Caco-2 (cell line): ENCODE measurements at regions of chr15 and their contacts with region 1.

Region 1: GRCh38 chr15:94844538-94845389 is 613.4 kb downstream of the MCTP2 start:
- DNase-seq: peak; percentile 78 to 84
- H3K4me3 ChIP-seq: peak overlapping the region; percentile 34
- H3K4me3 Mint-ChIP-seq: peak overlapping the region; percentile 76
- H3K27ac Mint-ChIP-seq: peak overlapping the region; percentile 84
- H3K4me1 ChIP-seq: peaks cover 10% of the 10 kb centered on the region; the same call in 1 of the 2 replicates
- H3K4me1 Mint-ChIP-seq: peaks cover 6% of the 10 kb centered on the region
- H3K27me3 ChIP-seq: no peaks in the 10 kb centered on the region
- H3K27me3 Mint-ChIP-seq: no peaks in the 10 kb centered on the region
- CTCF ChIP-seq: peak in 1 of 2 experiments; percentile 10

Region 2: GRCh38 chr15:94834506-94834905 is 10.3 kb before region 1 on chr15:
- CTCF ChIA-PET with region 1: interaction called, 4 read pairs
- POLR2A ChIA-PET with region 1: interaction called, 3 read pairs
- intact Hi-C with region 1: loop called (anchors 1 kb)
- DNase-seq: peak; percentile 40 to 65
- H3K4me3 ChIP-seq: no peak overlapping the region
- H3K4me3 Mint-ChIP-seq: peak overlapping the region; percentile 18
- H3K27ac Mint-ChIP-seq: peak overlapping the region; percentile 82
- H3K4me1 ChIP-seq: peaks cover 35% of the 10 kb centered on the region
- H3K4me1 Mint-ChIP-seq: peaks cover 18% of the 10 kb centered on the region
- H3K27me3 ChIP-seq: no peaks in the 10 kb centered on the region
- H3K27me3 Mint-ChIP-seq: no peaks in the 10 kb centered on the region
- CTCF ChIP-seq: no peak

Region 3: DNA sequence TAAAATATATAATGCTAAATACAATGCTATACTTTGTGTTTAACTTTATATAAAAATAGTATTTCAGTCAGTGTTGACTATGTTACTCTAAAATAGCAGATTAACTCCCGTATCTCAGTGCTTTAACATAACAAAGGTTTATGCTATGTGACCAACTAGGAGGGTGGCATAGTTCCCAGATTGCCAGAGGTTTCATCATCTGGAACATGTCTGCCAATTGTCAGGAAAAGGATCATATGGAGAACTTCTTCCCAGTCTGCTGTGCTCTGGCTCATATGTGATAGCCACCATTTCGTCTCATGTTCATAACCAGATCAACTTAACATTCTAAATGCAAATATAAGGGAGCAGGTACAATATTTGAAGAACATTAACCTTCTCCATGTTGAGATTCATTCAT is 106.8 kb after region 1 on chr15:
- CTCF ChIA-PET with region 1: no interaction called
- POLR2A ChIA-PET with region 1: no interaction called
- intact Hi-C with region 1: no loop called
- DNase-seq: no peak
- H3K4me3 ChIP-seq: no peak overlapping the region
- H3K4me3 Mint-ChIP-seq: no peak overlapping the region
- H3K27ac Mint-ChIP-seq: no peak overlapping the region
- H3K4me1 ChIP-seq: no peaks in the 10 kb centered on the region
- H3K4me1 Mint-ChIP-seq: no peaks in the 10 kb centered on the region
- H3K27me3 ChIP-seq: no peaks in the 10 kb centered on the region
- H3K27me3 Mint-ChIP-seq: peaks cover 2% of the 10 kb centered on the region
- CTCF ChIP-seq: no peak